Posterior vena cava (tissue), 2 donors: ENCODE measurements at regions of chr6 and their contacts with region 1.

Region 1: DNA sequence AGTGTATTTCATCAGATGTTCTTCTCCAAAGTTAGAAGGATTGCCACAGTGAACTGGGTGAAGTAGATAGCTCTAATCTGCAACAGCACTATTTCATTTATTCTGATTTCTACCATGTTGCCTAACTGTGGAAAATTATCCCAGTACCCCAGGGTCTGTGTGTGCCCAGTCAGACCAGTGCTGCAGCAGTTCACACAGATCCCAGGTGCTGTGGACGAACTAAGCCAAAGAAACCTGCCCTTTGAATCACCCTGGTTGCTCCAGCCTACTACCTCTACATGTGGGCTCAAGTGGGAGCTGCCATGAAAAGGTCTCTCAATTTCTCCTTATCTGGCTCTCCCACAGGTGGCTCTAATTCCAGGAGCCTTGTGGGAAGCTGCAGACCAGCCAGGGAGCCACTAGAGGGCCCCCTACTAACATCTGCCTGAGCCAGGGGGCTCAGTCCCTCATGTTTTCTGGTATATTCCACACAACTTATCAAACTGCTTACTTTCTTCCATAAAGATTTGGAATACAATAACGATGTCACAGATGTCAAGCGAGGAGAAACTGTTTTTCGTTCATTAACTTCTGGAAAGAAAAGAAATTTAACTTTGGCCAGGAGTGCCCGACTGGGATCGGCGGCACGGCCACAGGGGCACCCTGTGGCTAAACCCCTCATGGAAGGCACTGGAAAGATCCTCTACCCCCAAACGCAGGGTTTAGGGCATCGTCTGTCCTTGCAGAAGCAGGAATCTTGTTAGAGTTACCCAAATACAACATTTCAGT is 31.6 kb upstream of the LY86 start:
- DNase-seq: no peak

Region 2: GRCh38 chr6:6515691-6516607 is 41.0 kb before region 1 on chr6:
- intact Hi-C with region 1: no loop called
- DNase-seq: no peak

Region 3: DNA sequence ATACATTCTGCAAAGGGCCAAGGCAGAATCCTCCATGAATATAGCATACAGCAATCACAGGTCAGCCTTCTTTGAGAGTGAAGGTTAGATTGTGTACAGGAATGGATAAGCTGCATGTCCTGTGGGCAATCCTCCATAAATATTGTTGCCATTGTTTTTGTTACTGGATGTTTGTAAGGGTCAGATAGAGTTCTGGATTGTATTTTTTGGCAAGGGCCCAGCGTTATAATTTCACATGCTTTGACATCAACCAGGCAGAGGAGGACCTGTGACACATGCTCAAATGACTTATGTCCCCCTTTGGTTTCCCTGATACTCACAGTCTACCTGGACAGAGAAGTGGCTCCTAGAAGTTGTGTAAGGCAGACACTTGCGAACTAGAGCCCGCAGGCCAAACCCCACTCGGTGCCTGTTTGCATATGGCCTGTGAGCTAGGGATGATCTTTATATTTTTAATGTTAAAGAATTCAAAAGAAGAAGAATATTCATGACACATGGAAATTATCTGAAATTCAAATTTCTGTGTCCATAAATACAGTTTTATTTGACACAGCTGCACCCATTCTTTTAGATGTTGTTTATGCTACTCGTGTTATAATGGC is 37.0 kb after region 1 on chr6:
- intact Hi-C with region 1: loop called in 1 of 2 experiments (anchors 1 kb)
- DNase-seq: no peak

Region 4: DNA sequence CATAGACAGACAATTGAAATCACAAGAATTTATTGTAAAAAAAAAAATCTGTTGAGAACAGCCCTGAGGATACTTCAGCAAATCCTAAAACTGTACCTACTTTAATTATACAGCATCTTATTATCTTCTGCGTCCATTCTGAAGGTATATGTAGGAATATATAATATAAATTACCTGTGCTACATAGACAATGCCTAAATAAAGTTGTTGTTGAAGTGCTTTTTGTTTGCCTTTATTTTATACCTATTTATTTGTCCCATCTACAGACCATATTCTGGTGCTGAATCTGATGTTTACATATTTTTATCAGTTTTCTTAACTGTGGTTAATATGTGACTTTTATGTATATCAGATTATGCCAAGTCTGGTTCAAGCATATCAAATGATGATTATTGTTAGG is 1802.8 kb after region 1 on chr6:
- intact Hi-C with region 1: loop called in 1 of 2 experiments (anchors 5 kb)
- DNase-seq: no peak